ENCODE measurements at regions of chr2 and their contacts with region 1.

Region 1: DNA sequence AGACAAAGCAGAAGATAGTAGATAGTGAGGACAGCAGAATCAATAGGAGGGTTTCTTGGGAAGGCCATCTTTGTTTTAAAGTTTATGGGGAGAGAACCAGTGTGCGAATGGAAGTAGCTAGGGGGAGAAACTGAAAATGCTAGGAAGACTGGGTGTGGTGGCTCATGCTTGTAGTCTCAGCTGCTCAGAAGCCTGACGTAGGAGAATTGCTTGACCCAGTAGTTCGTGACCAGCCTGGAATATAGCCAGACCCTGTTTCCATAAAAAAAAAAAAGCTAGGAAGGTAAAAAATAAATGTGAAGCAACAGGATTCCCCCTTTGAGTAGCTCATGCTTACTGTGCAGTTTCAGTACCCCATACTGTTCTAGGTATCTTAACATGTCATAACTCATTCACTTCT is 19.2 kb upstream of the DRC1 start:
- DNase-seq: no peak
- H3K4me3 ChIP-seq: no peak overlapping the region
- H3K4me3 Mint-ChIP-seq: no peak overlapping the region
- H3K27ac Mint-ChIP-seq: no peak overlapping the region
- H3K4me1 ChIP-seq: peaks cover 6% of the 10 kb centered on the region; the same call in 1 of the 2 replicates
- H3K4me1 Mint-ChIP-seq: peaks cover 7% of the 10 kb centered on the region
- H3K27me3 ChIP-seq: no peaks in the 10 kb centered on the region
- H3K27me3 Mint-ChIP-seq: no peaks in the 10 kb centered on the region
- CTCF ChIP-seq: no peak

Region 2: GRCh38 chr2:26103752-26104151 is 278.8 kb before region 1 on chr2:
- CTCF ChIA-PET with region 1: no interaction called
- POLR2A ChIA-PET with region 1: no interaction called
- intact Hi-C with region 1: no loop called
- DNase-seq: no peak
- H3K4me3 ChIP-seq: no peak overlapping the region
- H3K4me3 Mint-ChIP-seq: no peak overlapping the region
- H3K27ac Mint-ChIP-seq: no peak overlapping the region
- H3K4me1 ChIP-seq: no peaks in the 10 kb centered on the region
- H3K4me1 Mint-ChIP-seq: no peaks in the 10 kb centered on the region
- H3K27me3 ChIP-seq: no peaks in the 10 kb centered on the region
- H3K27me3 Mint-ChIP-seq: no peaks in the 10 kb centered on the region
- CTCF ChIP-seq: no peak

Region 3: GRCh38 chr2:26807788-26808460 is 425.4 kb after region 1 on chr2:
- CTCF ChIA-PET with region 1: interaction called, 14 read pairs
- POLR2A ChIA-PET with region 1: no interaction called
- intact Hi-C with region 1: no loop called
- DNase-seq: peak in 1 of 2 experiments; percentile 16
- H3K4me3 ChIP-seq: no peak overlapping the region
- H3K4me3 Mint-ChIP-seq: no peak overlapping the region
- H3K27ac Mint-ChIP-seq: no peak overlapping the region
- H3K4me1 ChIP-seq: no peaks in the 10 kb centered on the region
- H3K4me1 Mint-ChIP-seq: no peaks in the 10 kb centered on the region
- H3K27me3 ChIP-seq: no peaks in the 10 kb centered on the region
- H3K27me3 Mint-ChIP-seq: peaks cover 3% of the 10 kb centered on the region
- CTCF ChIP-seq: no peak